Kidney (tissue), 22 donors: ENCODE measurements at regions of chr11 and their contacts with region 1.

Region 1: DNA sequence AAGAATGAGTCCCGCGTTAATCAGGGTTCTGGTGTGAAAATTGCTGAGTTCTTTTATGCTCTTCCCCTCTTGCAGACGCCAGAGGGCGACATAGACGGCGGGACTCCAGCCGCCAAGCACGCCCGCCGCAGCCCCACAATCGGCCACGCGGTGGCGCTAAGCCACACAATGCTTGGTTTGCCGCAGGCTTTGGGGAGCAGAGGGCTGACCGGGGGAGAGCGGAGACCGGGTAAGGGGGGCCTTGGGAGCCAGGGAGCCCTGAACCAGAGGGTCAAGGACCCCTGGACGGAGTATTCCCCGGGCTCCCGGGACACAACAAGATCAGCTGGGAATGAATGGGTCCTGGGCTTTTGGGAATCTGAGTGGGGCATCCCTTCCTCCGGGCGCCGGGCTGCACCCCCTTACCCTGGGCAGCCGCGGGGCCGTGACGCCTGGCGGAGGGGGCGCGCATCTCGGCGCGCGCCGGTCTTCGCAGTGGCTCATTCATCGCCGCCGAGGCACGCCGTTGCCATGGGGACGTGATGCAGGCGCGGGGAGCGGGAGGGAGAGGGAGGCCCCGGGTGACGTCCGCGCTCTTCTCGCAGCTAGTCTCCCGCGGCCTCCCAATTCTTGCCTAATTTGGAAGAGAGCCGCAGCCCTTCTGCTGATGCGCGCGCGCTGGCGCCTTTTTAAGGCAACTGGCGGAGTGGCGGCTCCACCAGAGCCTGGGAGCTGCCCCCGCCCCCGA is 12.2 kb upstream of the NPAS4 start:
- DNase-seq: peak; percentile 90 to 96 (median 92)
- H3K4me3 ChIP-seq: peak overlapping the region in 1 of 3 donors; percentile 29
- H3K27ac ChIP-seq: no peak overlapping the region
- H3K4me1 ChIP-seq: no peaks in the 10 kb centered on the region
- H3K27me3 ChIP-seq: no peaks in the 10 kb centered on the region
- CTCF ChIP-seq: peak; percentile 100

Region 2: DNA sequence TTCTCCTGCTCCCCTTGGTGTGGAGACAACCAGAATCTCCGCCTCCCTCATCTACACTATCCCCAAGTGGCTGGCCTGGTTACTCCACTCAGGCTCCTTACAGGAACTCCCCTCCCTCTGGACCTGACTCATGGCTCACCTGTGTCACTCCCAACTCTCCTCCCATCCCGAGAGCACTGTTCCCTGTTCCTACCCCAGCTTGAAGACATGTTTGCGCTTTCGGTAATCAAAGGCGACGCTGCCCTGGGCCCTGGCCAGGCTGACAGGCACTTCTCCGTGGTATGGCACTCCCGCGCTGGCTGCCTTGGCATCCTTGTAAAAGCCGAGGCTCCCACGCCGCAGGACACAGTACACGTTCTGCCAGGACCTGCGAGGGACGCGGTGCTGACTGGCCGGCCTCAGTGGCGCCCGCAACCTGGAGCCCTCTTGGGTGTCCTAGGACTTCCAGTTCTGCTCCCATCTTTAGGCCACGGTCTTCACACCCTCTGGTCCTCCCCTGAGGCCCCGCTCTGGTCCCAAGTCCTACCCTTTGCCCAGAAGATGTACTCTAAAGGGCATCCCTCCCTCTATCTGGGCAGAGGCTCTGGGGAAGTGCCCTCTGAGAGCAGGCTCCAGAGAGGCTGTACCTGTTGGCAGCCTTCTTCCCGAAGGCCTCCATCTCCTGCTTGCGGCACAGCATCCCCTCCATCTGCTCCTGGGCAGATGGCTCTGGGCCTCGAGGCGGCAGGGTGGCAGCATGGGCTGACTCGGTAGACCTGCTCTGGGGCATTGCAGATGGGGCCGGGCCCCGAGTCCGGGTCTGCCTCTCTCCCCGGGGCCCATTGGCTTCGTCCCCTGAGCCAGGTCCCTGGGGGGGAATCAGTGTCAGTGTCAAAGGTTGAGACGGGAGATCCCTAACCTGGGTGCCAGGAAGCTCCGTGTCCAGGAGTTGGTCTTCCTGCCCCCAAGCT is 278.4 kb after region 1 on chr11:
- intact Hi-C with region 1: loop called (anchors 10 kb)
- DNase-seq: no peak
- H3K4me3 ChIP-seq: no peak overlapping the region
- H3K27ac ChIP-seq: no peak overlapping the region
- H3K4me1 ChIP-seq: no peaks in the 10 kb centered on the region
- H3K27me3 ChIP-seq: no peaks in the 10 kb centered on the region
- CTCF ChIP-seq: no peak

Region 3: GRCh38 chr11:66744485-66745340 is 336.1 kb after region 1 on chr11:
- intact Hi-C with region 1: no loop called
- DNase-seq: peak; percentile 86 to 93 (median 91)
- H3K4me3 ChIP-seq: peak overlapping the region; percentile 79 to 86 (median 82)
- H3K27ac ChIP-seq: peak overlapping the region; percentile 82
- H3K4me1 ChIP-seq: no peaks in the 10 kb centered on the region
- H3K27me3 ChIP-seq: no peaks in the 10 kb centered on the region
- CTCF ChIP-seq: no peak

Region 4: DNA sequence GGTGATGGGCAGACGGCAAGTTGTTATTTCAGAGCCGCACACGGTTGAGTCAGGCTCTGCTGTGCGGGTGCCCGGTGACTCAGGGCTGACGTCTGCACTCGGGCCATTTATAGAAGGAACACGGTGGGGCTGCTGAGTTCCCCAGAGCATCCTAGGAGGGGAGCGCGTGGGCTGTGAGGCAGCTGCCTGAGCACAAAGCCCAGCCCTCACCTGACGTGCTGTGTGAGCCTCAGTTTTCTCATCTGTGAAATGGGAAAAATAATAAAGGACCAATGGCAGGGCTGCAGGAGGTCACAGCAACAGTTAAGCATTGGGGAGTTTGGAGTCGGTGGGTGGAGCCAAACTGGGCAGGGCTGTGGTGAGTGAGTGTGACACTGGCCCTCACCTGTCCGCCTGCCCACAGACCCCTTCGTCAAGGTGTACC is 636.7 kb after region 1 on chr11:
- intact Hi-C with region 1: no loop called
- DNase-seq: no peak
- H3K4me3 ChIP-seq: no peak overlapping the region
- H3K27ac ChIP-seq: no peak overlapping the region
- H3K4me1 ChIP-seq: no peaks in the 10 kb centered on the region
- H3K27me3 ChIP-seq: no peaks in the 10 kb centered on the region
- CTCF ChIP-seq: no peak